ENCODE measurements at regions of chr12 and their contacts with region 1.

Region 1: DNA sequence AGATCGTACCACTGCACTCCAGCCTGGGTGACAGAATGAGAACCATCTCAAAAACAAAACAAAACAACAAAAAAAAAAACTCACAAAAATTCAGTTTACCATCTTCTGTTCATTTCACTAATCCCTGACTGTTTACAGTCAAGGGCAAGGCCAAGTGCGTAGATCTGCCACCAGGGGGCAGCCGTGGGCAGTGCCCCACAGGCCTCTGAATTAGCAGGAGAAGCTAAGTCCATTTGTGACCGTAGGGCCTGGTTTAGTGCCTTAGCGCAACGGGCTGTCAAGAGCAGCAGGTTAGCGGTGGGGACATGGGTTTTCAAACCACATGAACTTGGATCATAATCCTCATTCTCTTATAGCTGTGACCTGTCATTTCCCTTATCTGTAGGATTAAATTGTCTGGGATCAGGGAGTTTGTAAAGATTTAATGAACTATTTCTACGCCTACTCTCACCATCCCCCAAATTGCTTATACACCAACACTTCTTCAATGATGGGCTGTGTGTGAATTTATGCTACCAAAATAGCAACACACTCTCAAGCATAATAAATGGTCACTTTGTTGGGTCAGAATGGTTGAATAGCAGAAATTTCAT is 49.0 kb downstream of the KCTD10 start:
- DNase-seq: peak; percentile 83
- H3K4me3 ChIP-seq: no peak overlapping the region
- H3K27ac ChIP-seq: no peak overlapping the region
- H3K4me1 ChIP-seq: peaks cover 4% of the 10 kb centered on the region
- H3K27me3 ChIP-seq: no peaks in the 10 kb centered on the region
- CTCF ChIP-seq: peak; percentile 95 to 97
- POLR2A ChIP-seq: no peak

Region 2: DNA sequence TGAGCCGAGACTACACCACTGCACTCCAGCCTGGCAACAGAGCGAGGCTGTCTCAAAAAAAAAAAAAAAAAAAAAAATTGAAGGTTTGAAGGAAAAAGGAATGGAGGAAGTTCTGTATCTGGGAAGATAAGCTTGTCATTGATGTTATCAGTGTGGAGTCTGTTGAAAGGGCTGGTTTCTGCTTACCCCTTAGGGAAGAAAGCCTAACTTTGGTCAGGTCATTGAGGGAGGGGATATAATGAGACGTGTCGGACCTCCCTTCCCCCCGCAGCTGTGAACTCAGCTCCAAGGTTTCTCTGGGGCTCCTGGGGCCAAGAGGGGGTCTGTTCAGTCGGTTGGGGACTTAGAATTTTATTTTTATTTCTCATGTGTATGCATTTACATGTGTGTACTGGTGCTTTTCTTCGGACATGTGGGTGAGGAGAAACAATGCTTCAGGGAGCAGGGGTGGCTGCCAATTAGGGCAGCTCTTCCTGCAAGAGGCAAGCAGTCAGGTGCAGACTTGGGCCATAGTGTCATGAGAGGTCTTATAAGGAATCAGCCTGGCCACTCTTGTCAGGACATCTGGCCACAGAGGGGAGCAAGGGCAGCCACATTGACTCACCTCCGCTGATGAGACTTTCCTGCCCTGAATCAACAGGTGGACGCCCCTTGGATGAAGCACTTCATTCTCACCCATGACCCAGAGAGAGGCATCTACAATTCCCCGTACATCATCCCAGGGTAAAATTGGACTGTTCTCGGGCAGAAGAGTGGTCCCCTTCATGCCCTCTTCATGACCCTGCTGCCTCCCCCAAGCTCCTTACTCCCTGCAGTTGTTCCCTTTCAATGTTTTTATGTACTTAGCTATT is 531.5 kb before region 1 on chr12:
- CTCF ChIA-PET with region 1: no interaction called
- POLR2A ChIA-PET with region 1: no interaction called
- dilution Hi-C with region 1: no loop called
- intact Hi-C with region 1: no loop called
- DNase-seq: peak; percentile 25
- H3K4me3 ChIP-seq: no peak overlapping the region
- H3K27ac ChIP-seq: no peak overlapping the region
- H3K4me1 ChIP-seq: no peaks in the 10 kb centered on the region
- H3K27me3 ChIP-seq: no peaks in the 10 kb centered on the region
- CTCF ChIP-seq: no peak
- POLR2A ChIP-seq: no peak

Region 3: DNA sequence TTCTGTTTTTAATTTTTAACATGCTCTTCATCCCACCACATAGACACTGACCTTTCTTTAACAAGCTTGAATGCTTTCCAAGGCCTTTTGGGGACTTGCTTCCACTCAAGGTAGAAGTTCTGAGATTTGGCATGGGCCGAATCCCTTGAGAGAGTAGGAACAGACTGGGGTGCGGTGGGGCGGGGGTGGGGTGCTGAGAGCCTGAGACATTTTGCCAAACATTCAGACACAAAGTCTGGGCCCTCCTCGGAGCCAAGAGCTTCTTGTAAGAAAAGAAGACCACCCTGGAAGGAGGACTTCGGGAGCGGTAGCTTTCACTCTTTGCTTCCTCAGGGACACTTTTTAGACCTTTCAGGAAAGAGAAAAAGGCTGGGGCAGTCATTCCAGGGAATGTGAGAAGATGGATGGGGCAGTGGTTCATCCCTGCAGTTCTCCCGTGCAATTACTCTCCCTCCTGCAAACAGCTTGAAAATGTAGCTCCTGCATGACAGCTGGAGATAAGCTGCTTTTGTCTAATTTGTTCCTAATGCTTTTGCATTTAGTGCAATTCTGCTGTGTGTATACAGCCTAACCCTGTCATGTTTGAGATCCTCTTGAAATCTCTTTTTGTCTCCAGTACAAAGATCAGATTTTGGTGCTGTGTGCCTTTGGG is 96.7 kb before region 1 on chr12:
- CTCF ChIA-PET with region 1: no interaction called
- POLR2A ChIA-PET with region 1: no interaction called
- dilution Hi-C with region 1: no loop called
- intact Hi-C with region 1: no loop called
- DNase-seq: no peak
- H3K4me3 ChIP-seq: no peak overlapping the region
- H3K27ac ChIP-seq: no peak overlapping the region
- H3K4me1 ChIP-seq: no peaks in the 10 kb centered on the region
- H3K27me3 ChIP-seq: peaks cover 5 to 6% of the 10 kb centered on the region in 2 experiments
- CTCF ChIP-seq: no peak
- POLR2A ChIP-seq: no peak

Region 4: GRCh38 chr12:109449845-109450532 is 21.9 kb after region 1 on chr12:
- CTCF ChIA-PET with region 1: interaction called, 21 read pairs
- POLR2A ChIA-PET with region 1: no interaction called
- dilution Hi-C with region 1: no loop called
- intact Hi-C with region 1: no loop called
- DNase-seq: no peak
- H3K4me3 ChIP-seq: no peak overlapping the region
- H3K27ac ChIP-seq: no peak overlapping the region
- H3K4me1 ChIP-seq: peaks cover 14% of the 10 kb centered on the region
- H3K27me3 ChIP-seq: no peaks in the 10 kb centered on the region
- CTCF ChIP-seq: no peak
- POLR2A ChIP-seq: no peak

Region 5: DNA sequence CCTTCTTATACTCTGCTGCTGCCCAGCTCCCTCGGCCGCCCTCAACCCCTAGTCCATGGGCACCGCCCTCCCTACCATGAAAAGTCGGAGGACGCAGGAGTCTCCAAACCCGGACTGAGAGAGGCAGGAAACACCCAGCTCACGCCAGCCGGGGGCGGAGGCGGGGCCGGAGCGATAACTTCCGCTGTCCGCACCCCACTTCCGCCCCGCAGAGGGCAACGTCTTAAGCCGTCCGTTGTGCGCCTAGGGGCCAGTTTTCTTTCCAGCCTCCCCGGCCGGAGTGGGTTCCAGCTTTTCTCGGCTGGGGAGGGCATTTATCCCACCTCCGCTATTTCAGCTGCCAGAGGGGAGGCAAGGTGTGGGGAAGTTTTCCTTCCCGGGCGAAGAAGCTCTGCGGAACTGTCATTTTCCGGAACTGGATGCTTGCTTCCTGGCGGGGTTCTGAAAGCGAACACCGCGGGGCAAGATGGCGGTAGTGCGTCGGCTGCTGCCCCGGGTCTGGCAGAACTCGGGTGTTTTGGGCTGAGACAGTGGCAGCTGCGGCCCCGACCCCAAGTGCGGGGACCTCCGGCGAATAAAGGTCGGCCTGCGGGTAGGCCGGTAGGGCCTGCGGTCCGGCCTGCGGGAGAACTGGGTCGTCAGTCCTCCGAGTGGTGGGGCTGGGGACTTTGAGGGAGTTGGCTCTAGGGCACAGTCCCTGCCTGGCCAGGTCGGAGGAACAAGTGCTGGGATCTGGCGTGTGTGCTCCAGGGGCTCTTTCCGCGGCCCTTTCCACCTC is 49.2 kb after region 1 on chr12 and contains the starts of genes KCTD10 and UBE3B:
- CTCF ChIA-PET with region 1: interaction called, 91 read pairs
- POLR2A ChIA-PET with region 1: interaction called, 5 read pairs
- dilution Hi-C with region 1: no loop called
- intact Hi-C with region 1: loop called (anchors 1 kb)
- DNase-seq: peak; percentile 86
- H3K4me3 ChIP-seq: peak within 1 kb of the TSS; percentile 91 to 97 (median 92)
- H3K27ac ChIP-seq: peak within 1 kb of the TSS; percentile 98
- H3K4me1 ChIP-seq: peaks cover 19% of the 10 kb centered on the region
- H3K27me3 ChIP-seq: no peaks in the 10 kb centered on the region
- CTCF ChIP-seq: no peak
- POLR2A ChIP-seq: peak; percentile 79
- total RNA-seq, gene KCTD10: 92.8 and 101 TPM in 2 replicates
- total RNA-seq, gene UBE3B: 32.7 and 40.8 TPM in 2 replicates

Region 6: DNA sequence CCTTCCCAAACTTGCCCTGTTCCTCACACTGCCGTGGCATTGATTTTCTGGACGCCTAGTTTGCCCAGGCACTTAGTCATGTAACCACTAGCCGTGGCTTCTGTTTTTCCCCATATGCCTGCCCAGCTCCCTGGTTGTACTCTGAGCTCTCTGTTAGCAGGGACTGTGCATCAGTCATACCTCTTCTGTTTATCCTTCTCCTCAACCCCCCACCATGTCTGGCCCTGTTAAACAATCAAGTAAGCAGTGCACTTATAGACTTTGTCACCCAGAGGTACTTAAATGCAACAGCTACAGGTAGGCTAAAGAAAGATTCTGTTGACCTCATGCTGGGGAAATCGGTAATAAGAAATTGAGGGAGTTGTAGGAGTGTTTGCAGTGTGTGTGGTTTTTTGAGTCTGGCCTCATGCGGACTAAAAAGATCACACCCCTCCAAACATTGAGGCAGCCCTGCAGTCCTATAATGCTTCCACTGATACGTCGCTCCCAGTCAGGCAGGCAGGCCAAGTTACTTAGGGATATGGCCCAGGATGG is 66.3 kb after region 1 on chr12:
- CTCF ChIA-PET with region 1: interaction called, 22 read pairs
- POLR2A ChIA-PET with region 1: no interaction called
- dilution Hi-C with region 1: no loop called
- intact Hi-C with region 1: no loop called
- DNase-seq: no peak
- H3K4me3 ChIP-seq: no peak overlapping the region
- H3K27ac ChIP-seq: no peak overlapping the region
- H3K4me1 ChIP-seq: no peaks in the 10 kb centered on the region
- H3K27me3 ChIP-seq: no peaks in the 10 kb centered on the region
- CTCF ChIP-seq: no peak
- POLR2A ChIP-seq: no peak

Region 7: DNA sequence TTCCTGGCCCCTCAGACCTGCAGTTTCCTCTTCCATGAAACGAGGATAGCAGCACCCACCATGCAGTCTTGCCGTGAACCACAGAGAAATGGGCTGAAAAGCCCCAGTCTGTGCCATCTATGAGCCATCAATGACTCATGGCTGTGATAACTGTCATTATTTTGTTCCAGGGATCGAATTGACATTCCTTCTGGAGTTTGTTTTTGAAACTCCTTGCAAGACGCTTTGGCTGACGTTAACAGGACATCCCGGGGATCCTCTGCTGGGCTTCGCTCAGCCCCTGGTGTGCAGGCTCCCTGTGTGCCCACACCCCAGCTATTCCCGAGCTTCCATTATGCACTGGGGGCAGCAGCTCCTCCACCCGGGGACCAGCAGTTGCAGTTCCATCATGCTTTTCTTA is 111.4 kb after region 1 on chr12:
- CTCF ChIA-PET with region 1: no interaction called
- POLR2A ChIA-PET with region 1: no interaction called
- dilution Hi-C with region 1: no loop called
- intact Hi-C with region 1: no loop called
- DNase-seq: peak; percentile 44
- H3K4me3 ChIP-seq: no peak overlapping the region
- H3K27ac ChIP-seq: no peak overlapping the region
- H3K4me1 ChIP-seq: peaks cover 13% of the 10 kb centered on the region
- H3K27me3 ChIP-seq: no peaks in the 10 kb centered on the region
- CTCF ChIP-seq: no peak
- POLR2A ChIP-seq: no peak

Region 8: DNA sequence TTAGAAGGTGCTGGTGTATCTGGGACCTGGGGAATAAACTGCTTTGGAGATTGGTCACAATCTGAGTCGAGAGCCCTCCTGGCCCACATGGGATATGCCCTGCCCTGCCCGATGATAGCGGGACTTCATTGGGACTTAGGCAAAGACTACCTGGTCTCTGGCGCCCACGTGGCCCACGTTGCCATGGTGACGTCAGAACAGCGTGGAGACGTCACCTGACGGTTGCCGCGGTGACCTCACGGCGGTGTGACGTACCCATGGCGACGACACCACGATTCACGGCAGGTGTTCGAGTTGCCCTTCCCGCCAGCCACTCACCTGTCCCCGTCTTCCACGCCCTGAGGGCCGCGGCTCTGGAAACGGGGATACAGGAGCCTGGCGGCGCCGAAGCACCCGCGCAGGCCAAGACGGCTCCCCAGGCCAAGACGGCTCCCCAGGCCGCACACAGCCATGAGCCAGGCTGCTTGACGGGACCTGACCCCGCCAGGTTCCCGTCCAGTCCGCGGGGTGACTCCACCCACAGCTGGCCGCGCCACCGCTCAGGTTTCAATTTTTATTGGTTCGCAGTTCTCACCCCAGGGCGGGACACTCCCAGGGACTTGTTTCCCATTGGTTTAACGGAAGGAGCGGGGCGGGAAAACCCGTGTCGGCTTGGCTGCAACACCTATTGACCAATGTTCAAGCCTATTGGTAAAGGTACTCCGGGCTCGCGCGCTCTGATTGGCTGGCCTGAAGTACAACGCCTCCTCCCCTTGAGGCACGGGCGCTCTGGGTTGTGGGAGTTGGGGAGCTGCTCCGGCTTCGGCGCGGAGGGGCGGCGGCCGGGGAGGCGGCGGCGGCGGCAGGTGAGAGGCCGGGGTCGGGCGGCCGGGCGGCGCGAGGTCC is 145.1 kb after region 1 on chr12 and contains the starts of genes MMAB and MVK:
- CTCF ChIA-PET with region 1: interaction called, 21 read pairs
- POLR2A ChIA-PET with region 1: no interaction called
- dilution Hi-C with region 1: no loop called
- intact Hi-C with region 1: loop called (anchors 2 kb)
- DNase-seq: peak; percentile 99
- H3K4me3 ChIP-seq: peak within 1 kb of the TSS; percentile 27 to 83 (median 82)
- H3K27ac ChIP-seq: peak within 1 kb of the TSS; percentile 42
- H3K4me1 ChIP-seq: peaks cover 16% of the 10 kb centered on the region
- H3K27me3 ChIP-seq: no peaks in the 10 kb centered on the region
- CTCF ChIP-seq: no peak
- POLR2A ChIP-seq: peak; percentile 73
- total RNA-seq, gene MMAB: 45.9 and 46.0 TPM in 2 replicates
- total RNA-seq, gene MVK: 40.3 and 42.6 TPM in 2 replicates

Region 9: GRCh38 chr12:109775172-109775881 is 347.2 kb after region 1 on chr12:
- CTCF ChIA-PET with region 1: interaction called, 93 read pairs
- POLR2A ChIA-PET with region 1: no interaction called
- dilution Hi-C with region 1: no loop called
- intact Hi-C with region 1: loop called (anchors 1 kb)
- DNase-seq: peak; percentile 62
- H3K4me3 ChIP-seq: no peak overlapping the region
- H3K27ac ChIP-seq: no peak overlapping the region
- H3K4me1 ChIP-seq: no peaks in the 10 kb centered on the region
- H3K27me3 ChIP-seq: no peaks in the 10 kb centered on the region
- CTCF ChIP-seq: peak; percentile 91
- POLR2A ChIP-seq: no peak